ENCODE measurements at regions of chr11 and their contacts with region 1.

Region 1: GRCh38 chr11:134040386-134041302 is 28.2 kb upstream of the JAM3 start:
- DNase-seq: peak; percentile 81
- H3K4me3 Mint-ChIP-seq: peak overlapping the region; percentile 13
- H3K27ac Mint-ChIP-seq: peak overlapping the region; percentile 84
- H3K4me1 Mint-ChIP-seq: peaks cover 36% of the 10 kb centered on the region
- H3K27me3 Mint-ChIP-seq: no peaks in the 10 kb centered on the region
- CTCF ChIP-seq: no peak

Region 2: DNA sequence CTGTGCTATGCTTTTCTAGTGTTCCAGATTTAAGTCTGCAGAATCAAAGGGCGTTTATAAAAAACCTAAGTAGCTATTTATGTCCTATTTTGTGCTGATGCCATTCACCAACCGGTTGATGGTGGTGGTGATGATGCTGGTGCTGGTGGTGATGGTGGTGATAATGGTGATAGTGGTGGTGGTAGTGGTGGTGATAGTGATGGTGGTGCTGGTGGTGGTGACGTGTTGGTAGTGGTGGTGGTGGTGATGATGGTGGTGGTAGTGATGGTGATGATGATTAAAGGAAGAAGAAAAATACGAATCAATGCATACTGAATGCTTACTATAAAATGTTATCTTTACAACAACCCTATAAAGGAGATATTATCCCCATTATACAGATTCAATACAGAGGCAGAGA is 686.6 kb before region 1 on chr11:
- CTCF ChIA-PET with region 1: no interaction called
- POLR2A ChIA-PET with region 1: no interaction called
- intact Hi-C with region 1: no loop called
- DNase-seq: no peak
- H3K4me3 Mint-ChIP-seq: no peak overlapping the region
- H3K27ac Mint-ChIP-seq: no peak overlapping the region
- H3K4me1 Mint-ChIP-seq: no peaks in the 10 kb centered on the region
- H3K27me3 Mint-ChIP-seq: no peaks in the 10 kb centered on the region
- CTCF ChIP-seq: no peak

Region 3: DNA sequence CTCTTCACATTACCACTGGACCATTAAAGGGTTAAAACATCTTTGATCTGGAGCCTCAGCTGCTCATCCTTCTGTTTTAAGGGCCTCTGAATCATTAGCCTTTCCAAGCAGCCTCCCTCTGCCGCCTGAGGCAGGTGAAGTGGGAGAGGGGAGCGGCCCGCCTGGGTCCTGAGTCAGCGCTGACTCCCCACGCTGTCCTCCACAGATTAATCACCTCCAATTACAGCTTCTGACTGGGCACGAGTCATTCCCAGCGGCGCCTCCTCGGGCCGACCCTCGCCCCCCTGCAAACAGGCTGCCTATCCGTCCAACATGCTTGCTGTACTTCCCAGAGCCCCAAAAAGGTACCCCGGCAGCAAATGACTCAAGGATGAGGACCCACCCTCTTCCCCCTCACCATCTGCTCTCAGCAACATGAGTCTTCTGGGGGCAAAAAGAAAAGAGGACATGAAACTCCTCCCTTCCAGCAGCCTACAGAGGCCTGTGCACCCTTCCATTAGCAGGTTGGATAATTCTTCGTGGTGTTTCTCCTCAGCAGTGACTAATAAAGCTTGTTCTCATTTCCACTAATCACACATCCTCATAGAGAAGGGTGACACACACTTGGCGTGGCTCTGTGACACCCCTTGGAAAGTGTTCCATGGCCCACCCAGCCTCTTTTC is 16.1 kb before region 1 on chr11:
- CTCF ChIA-PET with region 1: interaction called, 5 read pairs
- POLR2A ChIA-PET with region 1: interaction called, 76 read pairs
- intact Hi-C with region 1: no loop called
- DNase-seq: peak; percentile 89
- H3K4me3 Mint-ChIP-seq: peak overlapping the region; percentile 50
- H3K27ac Mint-ChIP-seq: peak overlapping the region; percentile 81
- H3K4me1 Mint-ChIP-seq: peaks cover 33% of the 10 kb centered on the region
- H3K27me3 Mint-ChIP-seq: no peaks in the 10 kb centered on the region
- CTCF ChIP-seq: no peak

Region 4: DNA sequence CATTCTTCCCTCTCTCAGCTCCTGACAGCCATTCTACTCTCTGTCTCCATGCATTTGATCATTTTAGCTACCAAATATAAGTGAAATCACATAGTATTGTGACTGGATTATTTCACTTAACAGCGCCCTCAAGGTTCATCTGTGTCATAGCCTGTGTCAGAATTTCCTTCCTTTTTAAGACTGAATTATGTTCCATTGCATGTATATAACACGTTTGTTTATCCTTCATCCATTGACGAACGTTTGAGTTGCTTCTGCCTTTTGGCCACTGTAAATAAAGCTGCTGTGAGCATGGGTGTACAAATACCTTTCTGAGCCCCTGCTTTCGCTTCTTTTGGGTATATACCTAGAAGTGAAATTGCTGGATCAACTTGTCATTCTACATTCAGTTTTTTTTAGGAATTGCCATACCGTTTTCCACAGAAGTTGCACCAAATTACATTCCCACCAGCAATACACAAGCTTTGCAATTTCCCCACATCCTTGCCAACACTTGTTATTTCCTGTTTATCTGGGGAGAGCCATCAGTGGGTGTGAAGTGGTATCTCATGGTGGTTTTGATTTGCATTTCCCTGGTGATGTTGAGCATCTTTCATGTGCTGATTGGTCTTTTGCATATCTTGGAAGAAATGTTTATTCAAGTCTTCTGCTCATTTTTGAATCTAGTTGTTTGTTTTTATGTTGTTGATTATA is 308.6 kb after region 1 on chr11:
- CTCF ChIA-PET with region 1: no interaction called
- POLR2A ChIA-PET with region 1: no interaction called
- intact Hi-C with region 1: no loop called
- DNase-seq: no peak
- H3K4me3 Mint-ChIP-seq: no peak overlapping the region
- H3K27ac Mint-ChIP-seq: no peak overlapping the region
- H3K4me1 Mint-ChIP-seq: no peaks in the 10 kb centered on the region
- H3K27me3 Mint-ChIP-seq: no peaks in the 10 kb centered on the region
- CTCF ChIP-seq: no peak

Measured in MCF 10A (cell line).